ENCODE measurements at regions of chr5 and their contacts with region 1.

Region 1: DNA sequence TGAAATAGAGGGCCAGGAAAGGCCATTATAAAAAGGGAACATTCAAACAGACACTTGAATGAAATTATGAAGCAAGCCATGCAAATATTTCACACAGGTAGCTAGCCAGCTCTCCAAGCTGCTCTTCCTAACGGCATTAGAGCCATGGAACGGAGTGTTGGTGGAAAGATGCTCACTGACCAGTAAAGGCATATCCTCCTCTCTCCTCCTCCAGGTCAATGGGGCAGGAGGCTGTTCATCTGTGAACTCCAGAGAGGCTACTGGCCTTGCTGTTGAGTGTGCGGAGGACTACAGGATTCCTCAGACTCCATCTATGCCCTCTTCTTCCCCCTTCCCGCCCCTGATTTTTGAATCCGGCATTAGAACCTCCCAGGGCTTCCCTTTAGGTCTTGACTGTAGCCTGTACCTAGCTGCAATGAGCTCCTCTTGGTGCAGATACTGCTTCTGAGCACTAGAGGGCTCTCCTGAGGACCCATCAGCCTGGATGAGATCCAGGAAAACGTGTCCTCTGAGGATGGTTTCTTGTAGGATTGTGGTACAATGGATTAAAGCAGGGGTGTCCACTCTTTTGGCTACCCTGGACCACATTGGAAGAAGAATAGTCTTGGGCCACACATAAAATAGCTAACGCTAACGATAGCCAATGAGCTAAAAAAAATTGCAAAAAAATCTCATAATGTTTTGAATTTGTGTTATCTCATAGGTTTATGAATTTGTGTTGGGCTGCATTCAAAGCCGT is 162.2 kb downstream of the SREK1 start:
- DNase-seq: no peak
- ATAC-seq: peak; percentile 90
- H3K4me3 ChIP-seq: no peak overlapping the region
- H3K27ac ChIP-seq: no peak overlapping the region
- H3K4me1 ChIP-seq: no peaks in the 10 kb centered on the region
- H3K27me3 ChIP-seq: peaks cover 0 to 2% of the 10 kb centered on the region in 2 donors

Region 2: DNA sequence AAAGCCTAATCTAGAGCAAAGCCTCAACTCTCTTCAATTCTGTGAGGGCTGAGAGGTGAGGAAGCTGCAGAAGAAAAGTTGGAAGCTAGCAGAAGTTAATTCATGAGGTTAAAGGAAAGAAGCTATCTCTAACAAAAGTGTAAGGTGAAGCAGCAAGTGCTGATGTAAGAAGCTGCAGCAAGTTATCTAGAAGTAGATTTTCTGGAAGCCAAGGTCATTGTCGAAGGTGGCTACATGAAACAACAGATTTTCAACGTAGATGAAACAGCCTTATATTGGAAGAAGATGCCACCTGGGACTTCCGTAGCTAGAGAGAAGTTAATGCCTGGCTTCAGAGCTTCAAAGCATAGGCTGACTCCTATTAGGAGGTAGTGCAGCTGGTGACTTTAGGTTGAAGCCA is 120.2 kb before region 1 on chr5:
- intact Hi-C with region 1: no loop called
- DNase-seq: no peak
- ATAC-seq: no peak
- H3K4me3 ChIP-seq: no peak overlapping the region
- H3K27ac ChIP-seq: no peak overlapping the region
- H3K4me1 ChIP-seq: no peaks in the 10 kb centered on the region
- H3K27me3 ChIP-seq: no peaks in the 10 kb centered on the region

Region 3: DNA sequence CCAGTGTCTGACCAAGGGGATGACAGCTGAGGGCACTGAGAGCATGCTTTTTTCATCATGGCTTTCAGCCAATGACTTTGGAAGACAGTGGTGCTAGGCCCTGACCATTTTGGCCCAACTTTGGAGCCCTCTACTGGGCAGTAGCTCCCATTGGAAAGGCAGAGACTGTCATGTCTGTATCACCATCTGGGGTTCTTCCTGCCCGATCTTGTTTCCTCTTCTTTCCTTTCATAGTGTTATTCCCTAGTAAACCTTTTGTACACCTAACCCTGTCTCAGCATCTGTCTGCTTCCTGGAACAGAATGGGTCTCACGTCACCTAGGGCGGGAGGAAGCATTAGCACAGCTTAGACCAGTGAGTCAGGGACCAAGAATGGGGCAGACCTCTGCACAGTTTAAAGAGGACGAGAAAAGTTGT is 192.5 kb after region 1 on chr5:
- intact Hi-C with region 1: loop called in 1 of 2 experiments (anchors 5 kb)
- DNase-seq: no peak
- ATAC-seq: no peak
- H3K4me3 ChIP-seq: no peak overlapping the region
- H3K27ac ChIP-seq: no peak overlapping the region
- H3K4me1 ChIP-seq: no peaks in the 10 kb centered on the region
- H3K27me3 ChIP-seq: no peaks in the 10 kb centered on the region

Region 4: GRCh38 chr5:66757188-66757833 is 451.0 kb after region 1 on chr5:
- intact Hi-C with region 1: loop called (anchors 1 to 5 kb)
- DNase-seq: no peak
- ATAC-seq: no peak
- H3K4me3 ChIP-seq: no peak overlapping the region
- H3K27ac ChIP-seq: no peak overlapping the region
- H3K4me1 ChIP-seq: no peaks in the 10 kb centered on the region
- H3K27me3 ChIP-seq: no peaks in the 10 kb centered on the region